ENCODE measurements at regions of chr1 and their contacts with region 1.

Region 1: GRCh38 chr1:207828485-207829158 is 76.8 kb downstream of the CD46 start:
- DNase-seq: peak; percentile 39 to 69 (median 57)
- ATAC-seq: peak; percentile 40
- H3K4me3 ChIP-seq: no peak overlapping the region
- H3K4me3 Mint-ChIP-seq: peak overlapping the region in 3 of 10 donors; percentile 1 to 21 (median 9)
- H3K27ac ChIP-seq: peak overlapping the region; percentile 26
- H3K27ac Mint-ChIP-seq: peak overlapping the region; percentile 43 to 100 (median 96)
- H3K4me1 ChIP-seq: peaks cover 36 to 75% of the 10 kb centered on the region in 2 donors
- H3K4me1 Mint-ChIP-seq: peaks cover 82 to 99% (median 97%) of the 10 kb centered on the region in 7 donors
- H3K27me3 ChIP-seq: no peaks in the 10 kb centered on the region
- H3K27me3 Mint-ChIP-seq: peaks cover 0 to 5% (median 0%) of the 10 kb centered on the region in 5 donors

Region 2: DNA sequence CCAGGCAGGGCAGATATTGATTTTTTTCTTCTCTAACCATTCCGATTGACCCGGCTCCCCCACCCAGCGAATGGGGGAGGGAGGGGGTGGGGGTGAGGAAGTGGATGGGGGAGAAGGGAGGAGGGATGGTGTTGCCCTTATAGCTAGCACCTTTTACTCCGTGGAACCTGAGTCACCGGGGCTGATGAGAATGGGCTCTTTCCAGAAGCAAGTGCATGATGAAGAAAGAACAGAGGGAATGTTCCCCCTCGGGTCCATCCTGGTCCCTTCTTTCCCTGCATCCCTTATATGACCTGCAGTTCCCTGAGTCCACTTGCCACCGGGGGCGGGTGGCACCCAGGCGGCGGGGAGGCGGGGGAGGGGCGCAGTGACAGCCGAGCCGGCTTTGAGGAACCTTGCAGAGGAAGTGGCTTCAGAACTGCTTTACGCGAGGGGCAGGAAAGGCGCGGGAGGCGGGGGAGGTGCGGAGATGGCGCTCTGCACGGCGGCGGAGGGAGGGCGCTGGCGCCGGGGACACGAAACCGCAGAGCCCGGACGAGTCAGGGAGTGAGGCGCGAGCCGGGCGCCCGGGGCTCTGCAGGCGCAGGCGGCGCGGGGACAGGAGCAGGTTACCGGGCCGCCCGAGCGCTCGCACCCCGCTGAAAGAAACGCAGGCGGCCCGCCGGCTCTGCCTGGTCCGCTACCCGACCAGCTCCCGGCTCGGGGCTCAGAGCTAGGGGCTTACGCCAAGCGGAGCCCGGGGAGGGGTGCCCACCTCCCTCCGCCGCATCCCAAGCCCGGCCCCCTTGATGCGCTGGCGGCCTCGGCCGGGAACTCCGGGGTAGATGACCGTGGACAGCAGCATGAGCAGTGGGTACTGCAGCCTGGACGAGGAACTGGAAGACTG is 1271.6 kb before region 1 on chr1:
- CTCF ChIA-PET with region 1: no interaction called
- POLR2A ChIA-PET with region 1: no interaction called
- intact Hi-C with region 1: loop called in 1 of 2 experiments (anchors 5 kb)
- DNase-seq: peak; percentile 78 to 93 (median 88)
- ATAC-seq: peak; percentile 86
- H3K4me3 ChIP-seq: peak overlapping the region; percentile 90
- H3K4me3 Mint-ChIP-seq: peak overlapping the region; percentile 77 to 99 (median 96)
- H3K27ac ChIP-seq: peak overlapping the region; percentile 90
- H3K27ac Mint-ChIP-seq: peak overlapping the region; percentile 86 to 100 (median 94)
- H3K4me1 ChIP-seq: peaks cover 61 to 66% of the 10 kb centered on the region in 2 donors
- H3K4me1 Mint-ChIP-seq: peaks cover 59 to 75% (median 70%) of the 10 kb centered on the region in 7 donors
- H3K27me3 ChIP-seq: no peaks in the 10 kb centered on the region
- H3K27me3 Mint-ChIP-seq: no peaks in the 10 kb centered on the region

Region 3: GRCh38 chr1:207797229-207797961 is 31.2 kb before region 1 on chr1:
- CTCF ChIA-PET with region 1: interaction called, 6 read pairs
- POLR2A ChIA-PET with region 1: interaction called, 16 read pairs
- intact Hi-C with region 1: loop called in 1 of 2 experiments (anchors 2 kb)
- DNase-seq: peak; percentile 46 to 69 (median 63)
- ATAC-seq: peak; percentile 88
- H3K4me3 ChIP-seq: no peak overlapping the region
- H3K4me3 Mint-ChIP-seq: no peak overlapping the region
- H3K27ac ChIP-seq: no peak overlapping the region
- H3K27ac Mint-ChIP-seq: peak overlapping the region in 3 of 9 donors; percentile 48 to 72 (median 67)
- H3K4me1 ChIP-seq: peaks cover 9 to 20% of the 10 kb centered on the region in 2 donors
- H3K4me1 Mint-ChIP-seq: peaks cover 24 to 48% (median 35%) of the 10 kb centered on the region in 7 donors
- H3K27me3 ChIP-seq: no peaks in the 10 kb centered on the region
- H3K27me3 Mint-ChIP-seq: no peaks in the 10 kb centered on the region

Region 4: GRCh38 chr1:207841901-207842300 is 13.3 kb after region 1 on chr1:
- CTCF ChIA-PET with region 1: interaction called, 14 read pairs
- POLR2A ChIA-PET with region 1: interaction called, 9 read pairs
- intact Hi-C with region 1: no loop called
- DNase-seq: no peak
- ATAC-seq: no peak
- H3K4me3 ChIP-seq: no peak overlapping the region
- H3K4me3 Mint-ChIP-seq: peak overlapping the region in 1 of 10 donors; percentile 3
- H3K27ac ChIP-seq: no peak overlapping the region
- H3K27ac Mint-ChIP-seq: peak overlapping the region in 5 of 9 donors; percentile 28 to 57 (median 56)
- H3K4me1 ChIP-seq: peaks cover 0 to 57% of the 10 kb centered on the region in 2 donors
- H3K4me1 Mint-ChIP-seq: peaks cover 57 to 97% (median 87%) of the 10 kb centered on the region in 7 donors
- H3K27me3 ChIP-seq: no peaks in the 10 kb centered on the region
- H3K27me3 Mint-ChIP-seq: no peaks in the 10 kb centered on the region

Region 5: DNA sequence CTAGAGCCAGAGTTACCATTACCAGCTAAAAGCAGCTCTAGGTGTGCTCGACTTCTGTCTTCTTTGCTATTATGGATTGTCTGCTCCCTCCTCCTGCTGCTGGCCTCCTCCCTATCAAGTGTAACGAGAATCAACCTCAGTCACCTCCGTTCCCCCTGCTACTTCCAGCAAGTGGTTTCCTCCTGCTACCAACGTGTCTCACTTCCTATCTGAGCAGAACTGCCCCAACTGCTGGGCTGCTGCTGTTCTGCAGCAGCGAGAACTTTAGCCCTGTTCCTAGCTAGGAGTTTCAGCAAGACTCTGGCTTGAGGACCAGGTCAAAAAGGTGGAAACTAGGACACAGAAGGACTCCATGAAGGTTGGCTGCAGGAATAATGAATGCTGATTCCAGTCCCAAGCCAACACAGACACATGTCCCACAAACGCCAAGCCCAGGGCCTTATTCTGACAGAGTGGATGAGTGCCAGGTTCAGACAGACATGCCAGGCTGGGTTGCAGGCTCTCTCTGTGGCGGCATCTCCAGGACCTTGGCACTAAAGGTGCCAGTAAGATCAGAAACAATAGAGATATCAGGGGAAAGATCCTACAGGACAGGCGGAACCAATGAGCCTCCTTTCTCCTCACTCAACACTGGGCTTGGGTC is 35.4 kb after region 1 on chr1:
- CTCF ChIA-PET with region 1: interaction called, 145 read pairs
- POLR2A ChIA-PET with region 1: interaction called, 547 read pairs
- intact Hi-C with region 1: loop called (anchors 1 kb)
- DNase-seq: peak in 7 of 9 donors; percentile 35 to 62 (median 59)
- ATAC-seq: peak; percentile 69
- H3K4me3 ChIP-seq: peak overlapping the region; percentile 2
- H3K4me3 Mint-ChIP-seq: peak overlapping the region in 9 of 10 donors; percentile 35 to 95 (median 67)
- H3K27ac ChIP-seq: peak overlapping the region; percentile 78
- H3K27ac Mint-ChIP-seq: peak overlapping the region in 8 of 9 donors; percentile 71 to 97 (median 90)
- H3K4me1 ChIP-seq: peaks cover 60 to 74% of the 10 kb centered on the region in 2 donors
- H3K4me1 Mint-ChIP-seq: peaks cover 3 to 67% (median 56%) of the 10 kb centered on the region in 7 donors
- H3K27me3 ChIP-seq: no peaks in the 10 kb centered on the region
- H3K27me3 Mint-ChIP-seq: no peaks in the 10 kb centered on the region

Region 6: GRCh38 chr1:207885129-207886032 is 56.8 kb after region 1 on chr1:
- CTCF ChIA-PET with region 1: interaction called, 18 read pairs
- POLR2A ChIA-PET with region 1: interaction called, 75 read pairs
- intact Hi-C with region 1: loop called (anchors 1 kb)
- DNase-seq: peak; percentile 50 to 75 (median 68)
- ATAC-seq: peak; percentile 86
- H3K4me3 ChIP-seq: no peak overlapping the region
- H3K4me3 Mint-ChIP-seq: peak overlapping the region in 5 of 10 donors; percentile 21 to 91 (median 29)
- H3K27ac ChIP-seq: no peak overlapping the region
- H3K27ac Mint-ChIP-seq: peak overlapping the region; percentile 63 to 99 (median 96)
- H3K4me1 ChIP-seq: peaks cover 21 to 25% of the 10 kb centered on the region in 2 donors
- H3K4me1 Mint-ChIP-seq: peaks cover 34 to 47% (median 44%) of the 10 kb centered on the region in 7 donors
- H3K27me3 ChIP-seq: no peaks in the 10 kb centered on the region
- H3K27me3 Mint-ChIP-seq: peaks cover 0 to 14% (median 5%) of the 10 kb centered on the region in 5 donors

Region 7: GRCh38 chr1:207981976-207982375 is 153.4 kb after region 1 on chr1:
- CTCF ChIA-PET with region 1: no interaction called
- POLR2A ChIA-PET with region 1: no interaction called
- intact Hi-C with region 1: no loop called
- DNase-seq: no peak
- ATAC-seq: no peak
- H3K4me3 ChIP-seq: no peak overlapping the region
- H3K4me3 Mint-ChIP-seq: no peak overlapping the region
- H3K27ac ChIP-seq: no peak overlapping the region
- H3K27ac Mint-ChIP-seq: no peak overlapping the region
- H3K4me1 ChIP-seq: no peaks in the 10 kb centered on the region
- H3K4me1 Mint-ChIP-seq: peaks cover 0 to 1% (median 0%) of the 10 kb centered on the region in 7 donors
- H3K27me3 ChIP-seq: no peaks in the 10 kb centered on the region
- H3K27me3 Mint-ChIP-seq: peaks cover 22 to 37% (median 32%) of the 10 kb centered on the region in 5 donors

Region 8: GRCh38 chr1:208245185-208245705 is 416.6 kb after region 1 on chr1:
- CTCF ChIA-PET with region 1: no interaction called
- POLR2A ChIA-PET with region 1: no interaction called
- intact Hi-C with region 1: loop called in 1 of 2 experiments (anchors 5 kb)
- DNase-seq: peak; percentile 36 to 67 (median 59)
- ATAC-seq: peak; percentile 77
- H3K4me3 ChIP-seq: peak overlapping the region; percentile 51
- H3K4me3 Mint-ChIP-seq: peak overlapping the region; percentile 75 to 92 (median 84)
- H3K27ac ChIP-seq: no peak overlapping the region
- H3K27ac Mint-ChIP-seq: peak overlapping the region in 5 of 9 donors; percentile 3 to 65 (median 37)
- H3K4me1 ChIP-seq: no peaks in the 10 kb centered on the region
- H3K4me1 Mint-ChIP-seq: peaks cover 6 to 17% (median 10%) of the 10 kb centered on the region in 7 donors
- H3K27me3 ChIP-seq: peaks cover 0 to 5% of the 10 kb centered on the region in 2 donors
- H3K27me3 Mint-ChIP-seq: peaks cover 13 to 58% (median 17%) of the 10 kb centered on the region in 5 donors